Left ventricle myocardium inferior (tissue), 1 donor: ENCODE measurements at regions of chr11 and their contacts with region 1.

Region 1: GRCh38 chr11:8415195-8415594 is 151.5 kb upstream of the LMO1 start:
- DNase-seq: no peak
- H3K4me3 ChIP-seq: no peak overlapping the region
- H3K27ac ChIP-seq: no peak overlapping the region
- H3K4me1 ChIP-seq: no peaks in the 10 kb centered on the region
- H3K27me3 ChIP-seq: no peaks in the 10 kb centered on the region
- CTCF ChIP-seq: no peak

Region 2: GRCh38 chr11:8503910-8504364 is 88.7 kb after region 1 on chr11:
- intact Hi-C with region 1: no loop called
- DNase-seq: no peak
- H3K4me3 ChIP-seq: no peak overlapping the region
- H3K27ac ChIP-seq: peak overlapping the region; percentile 40
- H3K4me1 ChIP-seq: peaks cover 9% of the 10 kb centered on the region
- H3K27me3 ChIP-seq: no peaks in the 10 kb centered on the region
- CTCF ChIP-seq: no peak

Region 3: DNA sequence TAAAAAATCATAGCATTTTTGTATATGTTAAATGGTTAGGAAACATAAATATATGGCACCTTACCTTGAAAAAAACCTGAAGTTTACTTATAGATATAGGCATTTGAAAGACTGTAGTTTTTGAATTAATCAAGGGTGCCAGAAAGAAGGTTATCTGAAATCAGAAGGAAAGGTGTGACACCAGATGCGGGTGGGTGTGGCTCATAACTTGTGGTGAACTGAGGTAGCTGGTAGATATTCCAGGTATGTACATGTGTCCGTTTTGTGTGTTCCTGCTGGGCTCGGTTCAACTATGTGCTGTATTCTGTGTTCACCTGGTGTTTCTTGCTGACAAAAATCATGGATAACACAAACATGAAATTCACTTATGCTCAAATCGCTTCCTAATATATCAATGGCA is 143.2 kb after region 1 on chr11:
- intact Hi-C with region 1: loop called (anchors 10 kb)
- DNase-seq: no peak
- H3K4me3 ChIP-seq: no peak overlapping the region
- H3K27ac ChIP-seq: no peak overlapping the region
- H3K4me1 ChIP-seq: no peaks in the 10 kb centered on the region
- H3K27me3 ChIP-seq: peaks cover 2% of the 10 kb centered on the region
- CTCF ChIP-seq: no peak